Left cardiac atrium (tissue), 4 donors: ENCODE measurements at regions of chr6 and their contacts with region 1.

Region 1: DNA sequence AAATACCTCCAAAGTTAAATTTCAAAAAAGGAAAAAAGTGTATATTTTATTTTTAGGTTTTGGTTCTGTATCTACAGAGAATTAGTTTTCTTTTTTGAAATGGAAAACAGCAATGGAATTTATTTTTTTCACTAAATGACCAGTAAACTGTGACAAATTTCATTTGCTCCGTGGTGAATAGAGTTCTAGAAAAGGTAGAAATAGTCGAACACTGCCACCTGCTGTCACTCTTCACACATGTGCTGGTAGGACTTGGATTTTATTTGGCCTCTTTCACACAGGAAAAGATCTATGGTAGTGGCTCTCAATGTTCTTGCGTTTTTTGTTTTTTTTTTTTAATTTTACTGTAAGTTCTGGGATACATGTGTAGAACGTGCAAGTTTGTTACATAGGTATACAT is 312.5 kb downstream of the EYA4 start:
- DNase-seq: peak; percentile 37
- ATAC-seq: peak; percentile 48 to 59

Region 2: DNA sequence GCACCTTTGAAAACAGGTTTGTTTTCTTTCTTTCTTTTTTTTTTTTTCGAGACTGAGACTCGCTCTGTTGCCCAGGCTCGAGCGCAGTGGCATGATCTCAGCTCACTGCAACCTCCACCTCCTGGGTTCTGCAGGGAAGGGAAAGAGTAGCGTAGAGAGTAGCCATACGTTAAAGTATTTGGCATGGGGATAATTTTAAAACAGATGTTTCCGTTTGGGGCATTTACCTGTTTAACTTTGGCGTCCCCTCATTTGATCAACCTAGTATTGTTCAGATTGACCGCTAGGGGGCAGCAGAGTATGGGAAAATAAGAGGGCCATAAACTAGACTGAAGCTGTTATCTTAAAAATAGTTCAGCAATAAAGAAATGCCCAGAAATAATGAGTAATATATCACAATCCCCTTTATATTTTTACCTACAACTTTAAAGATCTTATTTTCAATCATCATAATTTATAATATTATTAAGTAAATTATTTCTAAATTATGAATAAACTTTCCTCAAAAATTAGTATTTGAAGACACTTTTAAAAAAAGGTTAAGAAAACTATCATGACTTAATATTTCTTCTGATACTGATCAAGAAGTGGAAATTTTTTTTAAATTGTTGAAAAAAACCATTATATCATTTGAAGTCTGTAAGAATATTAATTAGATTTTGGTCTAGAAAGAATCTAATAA is 1023.2 kb before region 1 on chr6:
- intact Hi-C with region 1: loop called in 1 of 2 experiments (anchors 10 kb)
- DNase-seq: peak; percentile 48
- ATAC-seq: peak; percentile 64 to 72

Region 3: DNA sequence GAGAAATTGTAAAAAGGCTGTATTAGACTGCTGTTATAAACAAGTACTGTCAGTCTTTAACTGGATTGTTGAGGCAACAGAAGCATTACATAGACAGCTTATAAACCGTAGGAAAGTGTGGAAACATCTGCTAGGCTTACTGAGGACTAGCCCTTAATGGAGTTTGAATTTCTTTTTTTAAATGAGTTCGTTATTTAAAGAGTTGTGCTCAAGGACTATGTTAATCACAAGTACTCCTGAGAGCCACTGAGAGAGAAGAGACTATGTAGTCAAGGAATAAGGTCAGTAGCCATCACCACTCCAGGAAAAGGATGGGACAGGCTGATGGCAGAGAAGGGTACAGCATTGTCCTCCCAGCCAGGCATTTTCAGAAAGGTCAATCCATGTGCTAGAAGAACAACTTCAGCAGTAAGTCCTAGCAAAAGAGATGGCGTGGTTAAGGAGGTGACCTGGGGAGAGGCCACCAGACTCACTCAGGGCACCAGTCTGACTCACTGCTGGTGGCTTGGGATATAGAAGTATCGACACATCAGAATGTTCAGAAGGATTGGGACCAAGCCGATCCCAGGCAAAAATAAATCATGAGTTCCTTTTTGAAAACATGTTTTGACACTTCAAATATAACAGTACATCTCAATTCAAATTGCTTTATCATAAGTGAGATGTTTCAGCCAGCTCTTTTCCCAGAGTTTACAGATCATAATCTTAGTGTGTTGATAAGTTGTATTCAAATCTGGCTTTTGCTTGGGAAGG is 732.8 kb before region 1 on chr6:
- intact Hi-C with region 1: loop called in 1 of 2 experiments (anchors 10 kb)
- DNase-seq: no peak
- ATAC-seq: peak in 1 of 2 donors; percentile 24

Region 4: DNA sequence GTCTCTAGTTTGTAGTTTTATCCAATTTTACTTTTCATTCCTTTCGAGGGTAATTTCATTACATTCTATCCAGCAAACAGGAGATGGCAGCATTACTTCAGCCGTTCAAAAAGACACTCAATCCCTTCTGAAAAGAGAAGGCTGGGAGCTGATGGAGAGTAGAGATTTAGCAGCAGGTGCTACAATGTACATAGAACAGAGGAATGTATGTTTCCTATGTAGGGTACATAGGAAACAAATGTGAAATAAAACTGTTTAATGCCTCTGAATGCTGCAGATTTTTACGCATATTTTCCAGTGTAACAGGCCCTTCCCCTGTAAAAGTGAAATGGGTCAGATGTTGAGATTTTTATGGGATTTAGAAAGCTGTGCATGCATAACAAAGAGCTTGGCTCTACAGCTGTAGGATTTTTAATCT is 723.3 kb before region 1 on chr6:
- intact Hi-C with region 1: loop called (anchors 5 to 10 kb)
- DNase-seq: no peak
- ATAC-seq: peak in 1 of 2 donors; percentile 30

Region 5: GRCh38 chr6:132962936-132963868 is 590.5 kb before region 1 on chr6:
- intact Hi-C with region 1: loop called in 1 of 2 experiments (anchors 10 kb)
- DNase-seq: peak; percentile 75
- ATAC-seq: peak; percentile 79 to 83